Activated naive CD4-positive, alpha-beta T cell treated with anti-CD3 and anti-CD28 coated beads, Interleukin-2, amount 10 ng/mL, durations not matched to agents 7 days and 5 days (primary cell): ENCODE measurements at regions of chr22 and their contacts with region 1.

Region 1: GRCh38 chr22:26502688-26503561 is 9.3 kb downstream of the TFIP11 start:
- DNase-seq: peak; percentile 86
- H3K4me3 Mint-ChIP-seq: peak overlapping the region; percentile 31
- H3K27ac Mint-ChIP-seq: peak overlapping the region; percentile 83
- H3K4me1 Mint-ChIP-seq: peaks cover 29% of the 10 kb centered on the region
- H3K27me3 Mint-ChIP-seq: no peaks in the 10 kb centered on the region

Region 2: DNA sequence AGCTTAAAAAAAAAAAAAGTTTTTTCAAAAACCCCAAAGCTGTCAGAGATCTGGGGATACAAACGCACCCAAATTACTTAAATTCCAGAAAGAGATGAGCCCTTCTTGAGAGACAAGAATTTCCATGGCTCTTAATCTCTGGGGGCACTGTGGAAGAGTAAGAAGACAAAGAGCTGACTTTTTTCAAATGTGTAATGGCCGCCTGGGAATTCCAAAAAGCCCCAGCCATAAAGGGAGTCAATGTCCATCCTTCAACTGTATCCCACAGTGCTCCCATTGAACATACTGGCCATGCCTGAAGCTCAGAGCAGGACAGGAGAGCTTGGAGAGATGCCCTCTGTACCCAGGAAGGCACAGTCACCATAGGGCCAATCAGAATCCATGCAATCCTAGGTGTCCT is 111.3 kb before region 1 on chr22:
- CTCF ChIA-PET with region 1: no interaction called
- DNase-seq: no peak
- H3K4me3 Mint-ChIP-seq: no peak overlapping the region
- H3K27ac Mint-ChIP-seq: no peak overlapping the region
- H3K4me1 Mint-ChIP-seq: no peaks in the 10 kb centered on the region
- H3K27me3 Mint-ChIP-seq: peaks cover 37% of the 10 kb centered on the region

Region 3: GRCh38 chr22:26483439-26484359 is 19.2 kb before region 1 on chr22 and contains the starts of genes HPS4 and SRRD:
- CTCF ChIA-PET with region 1: interaction called, 12 read pairs
- DNase-seq: peak; percentile 93
- H3K4me3 Mint-ChIP-seq: peak within 1 kb of the TSS; percentile 92
- H3K27ac Mint-ChIP-seq: peak within 1 kb of the TSS; percentile 89
- H3K4me1 Mint-ChIP-seq: peaks cover 70% of the 10 kb centered on the region
- H3K27me3 Mint-ChIP-seq: no peaks in the 10 kb centered on the region

Region 4: GRCh38 chr22:26489447-26490031 is 13.4 kb before region 1 on chr22:
- CTCF ChIA-PET with region 1: interaction called, 12 read pairs
- DNase-seq: no peak
- H3K4me3 Mint-ChIP-seq: no peak overlapping the region
- H3K27ac Mint-ChIP-seq: no peak overlapping the region
- H3K4me1 Mint-ChIP-seq: peaks cover 29% of the 10 kb centered on the region
- H3K27me3 Mint-ChIP-seq: no peaks in the 10 kb centered on the region

Region 5: DNA sequence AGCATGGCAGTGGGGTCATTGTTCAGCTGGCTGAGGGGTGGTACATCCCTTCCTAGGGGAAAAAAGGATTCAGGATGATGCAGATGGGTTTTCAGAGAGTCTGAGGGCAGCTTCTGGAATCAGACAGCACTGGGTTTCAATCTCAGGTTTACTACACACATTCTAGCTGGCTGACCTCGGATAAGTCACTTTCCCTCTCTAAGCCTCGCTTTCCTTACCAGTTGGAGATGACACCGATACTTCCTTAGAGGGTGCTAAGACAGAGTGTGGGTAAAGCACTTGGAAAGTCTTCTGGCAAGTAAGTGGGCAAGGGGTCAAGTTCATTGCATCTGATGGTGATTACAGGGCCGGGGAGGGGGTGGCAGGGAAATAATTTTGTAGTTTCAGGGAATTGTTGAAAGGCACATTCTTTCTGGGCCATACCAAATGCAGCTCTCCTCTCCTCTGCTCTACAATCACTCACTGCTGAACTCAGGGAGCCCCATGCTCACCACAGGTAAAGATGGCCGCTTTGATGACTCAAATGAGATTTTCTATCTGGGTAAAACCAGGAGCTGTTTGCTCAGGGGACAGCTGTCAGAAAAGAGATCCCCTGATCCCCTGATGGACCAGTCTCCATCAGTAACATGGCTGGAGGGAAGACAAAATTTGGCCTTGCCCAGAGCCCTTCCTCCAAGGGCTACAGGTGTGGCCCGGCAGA is 147.9 kb after region 1 on chr22:
- CTCF ChIA-PET with region 1: interaction called, 11 read pairs
- DNase-seq: no peak
- H3K4me3 Mint-ChIP-seq: no peak overlapping the region
- H3K27ac Mint-ChIP-seq: no peak overlapping the region
- H3K4me1 Mint-ChIP-seq: peaks cover 43% of the 10 kb centered on the region
- H3K27me3 Mint-ChIP-seq: peaks cover 52% of the 10 kb centered on the region

Region 6: GRCh38 chr22:26665813-26666231 is 162.9 kb after region 1 on chr22:
- CTCF ChIA-PET with region 1: interaction called, 61 read pairs
- DNase-seq: no peak
- H3K4me3 Mint-ChIP-seq: no peak overlapping the region
- H3K27ac Mint-ChIP-seq: no peak overlapping the region
- H3K4me1 Mint-ChIP-seq: peaks cover 62% of the 10 kb centered on the region
- H3K27me3 Mint-ChIP-seq: no peaks in the 10 kb centered on the region